Lower leg skin (tissue), 4 donors: ENCODE measurements at regions of chr15 and their contacts with region 1.

Region 1: GRCh38 chr15:89383365-89384175 is 48.9 kb upstream of the POLG start:
- DNase-seq: peak in 1 of 2 donors; percentile 28
- H3K4me3 ChIP-seq: no peak overlapping the region
- CTCF ChIP-seq: no peak
- POLR2A ChIP-seq: no peak

Region 2: DNA sequence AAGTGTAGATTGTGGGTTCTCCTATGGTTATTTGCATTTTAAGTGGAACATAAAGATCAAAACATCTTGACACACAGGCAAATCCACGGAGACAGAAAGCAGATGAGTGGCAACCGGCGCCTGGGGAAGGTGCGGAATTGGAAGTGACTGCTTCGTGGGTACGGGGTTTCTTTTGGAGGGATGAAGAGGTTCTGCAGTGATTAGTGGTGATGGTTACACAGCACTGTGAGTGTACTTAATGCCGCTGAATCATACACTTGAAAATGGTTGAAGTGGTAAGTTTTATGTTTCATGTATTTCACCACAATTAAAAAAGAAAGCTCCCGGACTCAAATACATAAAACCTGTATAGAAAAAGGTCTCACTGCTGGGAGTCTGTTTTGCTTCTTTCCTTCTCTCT is 1657.3 kb after region 1 on chr15:
- intact Hi-C with region 1: loop called (anchors 5 kb)
- DNase-seq: peak in 1 of 2 donors; percentile 53
- H3K4me3 ChIP-seq: no peak overlapping the region
- CTCF ChIP-seq: no peak
- POLR2A ChIP-seq: no peak